ENCODE measurements at regions of chr19 and their contacts with region 1.

Region 1: DNA sequence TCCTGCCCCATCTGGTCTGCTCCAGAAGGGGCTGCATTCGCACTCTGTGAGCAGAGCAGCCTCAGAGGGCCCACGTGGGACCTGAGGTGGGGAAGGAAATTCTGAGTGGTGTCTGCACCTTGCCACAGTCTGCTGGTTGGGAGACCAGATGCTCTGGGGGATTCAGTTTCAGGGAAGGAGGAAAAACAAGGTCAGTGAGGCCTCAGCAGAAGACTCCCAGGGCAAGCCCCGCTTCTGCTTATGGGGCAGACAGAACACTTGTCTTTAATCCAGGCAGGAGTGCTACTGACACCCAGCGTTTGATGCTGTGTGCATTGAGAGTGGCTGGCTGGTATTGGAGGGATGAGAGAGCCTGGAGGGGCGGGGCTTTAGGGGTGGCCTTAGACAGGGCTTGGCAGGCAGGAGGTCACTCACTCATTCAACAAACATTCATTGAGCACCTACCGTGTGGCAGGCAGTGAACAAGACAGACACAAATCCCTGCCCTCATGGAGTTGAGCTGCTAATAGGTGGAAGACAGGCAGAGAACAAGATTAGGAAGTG is 4.9 kb upstream of the CLEC17A start:
- DNase-seq: no peak
- H3K4me3 ChIP-seq: no peak overlapping the region
- H3K27ac ChIP-seq: no peak overlapping the region
- H3K4me1 ChIP-seq: peaks cover 3 to 9% (median 7%) of the 10 kb centered on the region in 4 donors
- H3K27me3 ChIP-seq: no peaks in the 10 kb centered on the region
- CTCF ChIP-seq: no peak
- EP300 ChIP-seq: no peak
- POLR2A ChIP-seq: no peak

Region 2: GRCh38 chr19:14529254-14530004 is 48.5 kb before region 1 on chr19 and contains the start of gene TECR:
- intact Hi-C with region 1: no loop called
- DNase-seq: peak; percentile 100
- H3K4me3 ChIP-seq: peak within 1 kb of the TSS; percentile 59 to 82 (median 66)
- H3K27ac ChIP-seq: peak within 1 kb of the TSS; percentile 88 to 93 (median 92)
- H3K4me1 ChIP-seq: peaks cover 23 to 28% (median 25%) of the 10 kb centered on the region in 4 donors
- H3K27me3 ChIP-seq: no peaks in the 10 kb centered on the region
- CTCF ChIP-seq: no peak
- EP300 ChIP-seq: no peak
- POLR2A ChIP-seq: peak; percentile 94
- total RNA-seq, gene TECR: 18.7 to 32.7 (median 25.7) TPM

Region 3: DNA sequence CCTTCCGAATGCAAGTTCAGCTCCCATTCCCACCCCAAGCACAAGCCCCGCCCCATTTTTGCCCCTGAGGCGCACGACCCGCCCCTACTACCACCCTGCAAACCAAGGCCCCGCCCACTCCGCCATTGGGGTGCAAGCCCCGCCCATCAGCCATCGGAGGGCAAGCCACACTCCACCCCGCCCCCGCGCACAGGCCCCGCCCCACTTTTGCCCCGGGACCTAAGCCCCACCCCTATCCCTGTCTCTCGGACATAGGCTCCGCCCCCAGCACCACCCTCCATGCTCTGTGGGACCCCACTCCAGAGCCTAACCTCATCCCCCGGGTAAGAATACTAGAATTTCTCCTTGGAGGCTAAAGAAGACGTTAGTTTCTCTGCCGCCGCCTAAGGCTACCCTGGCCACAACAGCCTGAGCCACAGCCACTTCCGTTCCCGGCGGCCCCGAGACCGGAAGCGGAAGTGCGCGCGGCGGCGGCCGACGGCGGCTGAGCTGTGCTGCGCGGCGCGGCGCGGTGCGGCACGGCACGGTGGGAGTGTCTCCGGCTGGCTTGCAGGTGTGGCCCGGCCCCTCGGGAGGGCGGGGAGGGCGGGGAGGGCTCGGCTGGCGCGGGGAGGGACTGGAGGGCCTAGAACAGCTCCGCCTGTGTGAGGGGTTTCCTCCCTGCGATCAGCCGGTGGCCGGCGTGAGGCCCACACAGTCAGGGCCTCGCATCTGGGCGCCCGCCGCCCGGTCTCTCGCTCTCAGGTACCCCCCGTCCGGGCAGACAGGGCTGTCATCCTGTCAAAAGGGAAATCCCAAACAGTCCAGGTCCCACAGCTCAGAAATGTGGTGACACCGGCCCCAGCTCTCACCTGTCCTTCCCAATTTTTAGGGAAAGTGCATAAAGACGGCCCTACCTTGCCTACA is 111.9 kb after region 1 on chr19 and contains the start of gene ZNF333:
- intact Hi-C with region 1: loop called (anchors 5 kb)
- DNase-seq: peak; percentile 99
- H3K4me3 ChIP-seq: peak within 1 kb of the TSS; percentile 75 to 92 (median 80)
- H3K27ac ChIP-seq: peak within 1 kb of the TSS; percentile 87 to 95 (median 93)
- H3K4me1 ChIP-seq: peaks cover 7 to 30% (median 26%) of the 10 kb centered on the region in 4 donors
- H3K27me3 ChIP-seq: no peaks in the 10 kb centered on the region
- CTCF ChIP-seq: no peak
- EP300 ChIP-seq: no peak
- POLR2A ChIP-seq: no peak
- total RNA-seq, gene ZNF333: 14.5 to 32.9 (median 25.4) TPM

Region 4: DNA sequence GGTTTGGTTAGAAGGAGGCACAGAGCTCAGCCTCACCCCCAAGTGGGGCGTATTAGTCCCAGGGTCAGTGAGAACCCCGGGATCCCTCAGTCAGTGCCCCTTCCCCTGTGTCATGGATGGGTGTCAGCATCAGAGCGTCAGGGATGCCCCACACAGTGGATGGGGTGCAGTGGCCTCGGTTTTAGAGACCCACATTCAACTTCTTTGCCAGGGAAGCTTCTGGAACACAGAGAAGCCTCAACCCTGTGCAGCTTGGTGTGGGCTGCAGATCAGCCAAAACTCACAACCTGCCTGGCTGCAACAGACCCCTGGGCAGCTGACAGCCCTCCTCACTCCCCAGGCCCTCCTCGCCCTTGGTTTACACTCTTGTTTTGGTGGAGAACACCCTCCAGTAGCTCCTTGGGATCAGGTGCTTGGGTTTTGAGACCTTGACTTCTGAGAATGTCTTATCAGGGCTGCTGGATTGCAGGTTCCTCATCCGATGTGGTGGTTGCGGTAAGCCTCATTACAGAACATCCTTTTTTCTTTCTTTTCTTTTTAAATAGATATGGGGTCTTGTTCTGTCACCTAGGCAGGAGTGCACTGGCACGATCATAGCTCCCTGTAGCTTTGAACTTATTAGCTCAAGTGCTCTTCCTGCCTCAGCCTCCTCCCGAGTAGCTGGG is 122.9 kb after region 1 on chr19:
- intact Hi-C with region 1: no loop called
- DNase-seq: no peak
- H3K4me3 ChIP-seq: no peak overlapping the region
- H3K27ac ChIP-seq: no peak overlapping the region
- H3K4me1 ChIP-seq: no peaks in the 10 kb centered on the region
- H3K27me3 ChIP-seq: no peaks in the 10 kb centered on the region
- CTCF ChIP-seq: no peak
- EP300 ChIP-seq: no peak
- POLR2A ChIP-seq: no peak

Measured in esophagus muscularis mucosa (tissue), 4 donors.